Ascending aorta (tissue), 2 donors: ENCODE measurements at regions of chr12 and their contacts with region 1.

Region 1: GRCh38 chr12:93378373-93379325 is 924 bp downstream of the NUDT4 start:
- DNase-seq: peak in 1 of 2 donors; percentile 74
- H3K4me3 ChIP-seq: peak overlapping the region; percentile 56 to 93
- H3K27ac ChIP-seq: peak overlapping the region; percentile 96 to 99
- H3K4me1 ChIP-seq: peaks cover 5 to 33% of the 10 kb centered on the region in 2 donors
- H3K27me3 ChIP-seq: no peaks in the 10 kb centered on the region
- CTCF ChIP-seq: no peak

Region 2: GRCh38 chr12:92987362-92987761 is 391.3 kb before region 1 on chr12:
- intact Hi-C with region 1: loop called (anchors 5 kb)
- DNase-seq: no peak
- H3K4me3 ChIP-seq: no peak overlapping the region
- H3K27ac ChIP-seq: peak overlapping the region; percentile 46 to 50
- H3K4me1 ChIP-seq: peaks cover 0 to 4% of the 10 kb centered on the region in 2 donors
- H3K27me3 ChIP-seq: no peaks in the 10 kb centered on the region
- CTCF ChIP-seq: peak; percentile 35 to 66 (median 44)

Region 3: GRCh38 chr12:93098077-93098476 is 280.6 kb before region 1 on chr12:
- intact Hi-C with region 1: no loop called
- DNase-seq: peak; percentile 10 to 78
- H3K4me3 ChIP-seq: no peak overlapping the region
- H3K27ac ChIP-seq: no peak overlapping the region
- H3K4me1 ChIP-seq: no peaks in the 10 kb centered on the region
- H3K27me3 ChIP-seq: no peaks in the 10 kb centered on the region
- CTCF ChIP-seq: peak; percentile 6 to 44 (median 30)

Region 4: DNA sequence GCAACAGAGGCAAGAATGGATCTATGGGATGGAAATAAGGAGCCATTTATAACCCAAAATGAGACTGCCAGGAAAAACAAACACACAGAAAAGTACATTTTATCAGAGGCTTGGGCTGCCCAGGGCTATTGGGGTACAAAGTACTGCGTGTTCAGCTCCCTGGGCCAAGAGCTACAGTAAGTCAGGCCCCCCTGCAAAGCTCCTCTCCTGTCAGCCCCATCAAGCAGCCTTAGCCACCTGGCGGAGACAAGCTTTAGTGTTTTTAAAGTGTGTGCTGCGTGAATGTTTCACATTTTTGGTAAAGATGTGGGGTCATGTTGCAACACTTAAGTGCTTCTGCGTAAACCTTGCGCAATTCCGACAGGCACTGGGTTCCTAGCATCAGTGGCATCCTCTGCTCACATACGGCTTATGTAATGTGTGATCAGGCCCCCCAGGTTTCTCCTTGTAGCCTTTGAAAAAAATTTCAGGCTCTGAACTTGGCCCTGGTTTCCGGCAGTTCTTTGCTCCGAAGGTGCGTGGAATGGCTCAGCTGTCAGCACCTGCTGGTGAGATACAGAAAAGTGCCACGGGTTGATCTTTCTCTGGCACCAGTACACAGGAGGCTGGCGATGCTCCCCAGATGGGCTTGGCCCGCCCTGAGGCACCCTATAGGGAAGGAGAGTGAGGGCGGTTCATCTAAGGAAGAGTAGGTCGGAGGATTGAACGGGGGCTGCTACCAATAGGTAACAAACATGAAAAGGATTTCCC is 250.9 kb before region 1 on chr12:
- intact Hi-C with region 1: loop called (anchors 2 kb)
- DNase-seq: peak; percentile 46 to 93
- H3K4me3 ChIP-seq: peak overlapping the region in 1 of 2 donors; percentile 10
- H3K27ac ChIP-seq: peak overlapping the region; percentile 77 to 81
- H3K4me1 ChIP-seq: peaks cover 3 to 18% of the 10 kb centered on the region in 2 donors
- H3K27me3 ChIP-seq: no peaks in the 10 kb centered on the region
- CTCF ChIP-seq: peak; percentile 54 to 70 (median 60)

Region 5: DNA sequence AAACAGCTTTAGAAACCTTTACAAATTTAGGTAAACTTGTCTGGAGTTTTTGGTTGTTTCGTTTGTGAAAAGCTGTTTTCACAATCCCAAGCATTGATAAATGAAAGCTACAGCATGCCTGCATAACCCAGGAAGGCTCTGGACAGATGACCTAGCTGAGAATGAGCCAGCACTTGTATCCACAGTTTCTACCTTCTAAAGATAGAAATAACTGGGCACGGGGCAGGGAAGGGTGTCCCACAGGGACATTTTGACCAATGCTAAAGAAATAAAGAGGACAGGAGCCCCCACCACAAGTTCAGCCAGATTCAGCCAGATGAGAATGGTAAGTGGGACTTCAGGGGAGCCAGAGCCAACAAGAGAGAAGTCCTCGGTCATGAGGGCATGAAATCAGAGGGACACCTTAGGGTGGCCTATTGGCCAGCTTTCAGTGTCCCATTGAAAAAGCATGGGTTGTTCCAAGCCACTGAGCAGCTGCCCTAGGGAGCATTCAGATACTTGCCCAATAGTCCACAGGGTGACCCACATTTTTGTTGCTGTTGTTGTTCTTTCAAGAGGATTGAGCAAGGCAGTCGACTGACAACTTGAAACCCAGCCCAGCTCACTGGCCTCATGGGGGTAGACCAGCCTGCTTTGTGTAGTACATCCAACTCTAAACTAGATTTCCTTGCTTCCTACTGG is 141.3 kb before region 1 on chr12:
- intact Hi-C with region 1: loop called (anchors 5 kb)
- DNase-seq: peak; percentile 66 to 87
- H3K4me3 ChIP-seq: peak overlapping the region in 1 of 2 donors; percentile 3
- H3K27ac ChIP-seq: peak overlapping the region; percentile 66 to 81
- H3K4me1 ChIP-seq: peaks cover 2 to 6% of the 10 kb centered on the region in 2 donors
- H3K27me3 ChIP-seq: no peaks in the 10 kb centered on the region
- CTCF ChIP-seq: no peak

Region 6: DNA sequence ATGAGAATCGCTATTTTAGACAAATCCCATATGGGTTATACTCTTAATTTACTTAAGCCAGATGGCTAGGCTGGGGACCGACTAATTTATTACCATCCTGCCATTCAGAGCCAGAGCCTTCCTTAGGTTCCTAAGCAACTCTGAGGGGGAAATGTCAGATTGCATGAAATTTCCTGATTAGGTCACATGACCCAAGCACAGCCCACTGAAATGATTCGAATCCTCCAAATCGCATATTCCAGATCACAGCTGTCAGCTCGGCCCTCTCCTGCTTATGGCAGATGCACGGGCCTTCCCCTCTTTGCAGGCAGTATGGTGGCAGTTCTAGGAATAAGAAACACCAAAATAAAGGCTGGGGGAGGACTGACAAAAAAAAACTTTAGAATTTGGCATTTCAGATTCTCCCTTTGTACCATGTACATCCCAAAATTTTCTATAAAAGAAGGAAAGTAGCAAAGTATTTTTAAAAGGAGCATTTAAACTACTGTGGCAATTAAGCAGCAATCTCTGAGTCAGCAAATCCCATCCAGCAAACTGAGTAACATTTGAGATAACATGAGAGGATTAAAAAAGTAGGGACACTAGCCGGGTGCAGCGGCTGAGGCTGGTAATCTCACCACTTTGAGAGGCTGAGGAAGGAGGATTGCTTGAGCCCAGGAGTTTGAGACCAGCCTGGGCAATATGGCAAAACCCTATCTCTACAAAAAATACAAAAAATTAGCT is 31.4 kb before region 1 on chr12:
- intact Hi-C with region 1: loop called (anchors 2 kb)
- DNase-seq: no peak
- H3K4me3 ChIP-seq: no peak overlapping the region
- H3K27ac ChIP-seq: peak overlapping the region in 1 of 2 donors; percentile 83
- H3K4me1 ChIP-seq: peaks cover 0 to 10% of the 10 kb centered on the region in 2 donors
- H3K27me3 ChIP-seq: no peaks in the 10 kb centered on the region
- CTCF ChIP-seq: no peak

Region 7: DNA sequence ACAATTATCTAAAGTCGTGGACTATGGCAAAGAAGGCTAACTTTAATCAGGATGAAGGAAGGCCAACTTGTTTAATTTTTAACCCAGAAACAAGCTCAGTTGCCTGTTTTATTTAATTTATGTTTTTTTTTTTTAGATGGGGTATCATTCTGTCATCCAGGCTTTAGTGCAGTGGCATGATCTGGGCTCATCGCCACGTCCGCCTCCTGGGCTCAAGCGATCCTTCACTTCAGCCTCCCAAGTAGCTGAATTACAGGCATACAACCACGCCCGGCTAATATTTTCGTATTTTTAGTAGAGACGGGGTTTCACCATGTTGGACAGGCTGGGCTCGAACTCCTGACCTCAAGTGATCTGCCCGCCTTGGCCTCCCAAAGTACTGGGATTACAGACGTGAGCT is 18.8 kb after region 1 on chr12:
- intact Hi-C with region 1: loop called (anchors 2 kb)
- DNase-seq: no peak
- H3K4me3 ChIP-seq: no peak overlapping the region
- H3K27ac ChIP-seq: no peak overlapping the region
- H3K4me1 ChIP-seq: peaks cover 0 to 4% of the 10 kb centered on the region in 2 donors
- H3K27me3 ChIP-seq: no peaks in the 10 kb centered on the region
- CTCF ChIP-seq: no peak